Activated CD8-positive, alpha-beta T cell treated with anti-CD3 and anti-CD28 coated beads, Interleukin-2, amount 10 ng/mL, durations not matched to agents 7 days and 5 days (primary cell): ENCODE measurements at regions of chr10 and their contacts with region 1.

Region 1: GRCh38 chr10:114876602-114877300 is 55.2 kb downstream of the FHIP2A start:
- DNase-seq: peak; percentile 55
- ATAC-seq: peak; percentile 67
- H3K4me3 Mint-ChIP-seq: no peak overlapping the region
- H3K27ac Mint-ChIP-seq: no peak overlapping the region
- H3K4me1 Mint-ChIP-seq: peaks cover 15% of the 10 kb centered on the region
- H3K27me3 Mint-ChIP-seq: peaks cover 31% of the 10 kb centered on the region

Region 2: GRCh38 chr10:114821293-114821914 is 55.3 kb before region 1 on chr10 and contains the start of gene FHIP2A:
- CTCF ChIA-PET with region 1: interaction called, 15 read pairs
- POLR2A ChIA-PET with region 1: interaction called, 3 read pairs
- DNase-seq: peak; percentile 84
- ATAC-seq: peak; percentile 93
- H3K4me3 Mint-ChIP-seq: peak within 1 kb of the TSS; percentile 95
- H3K27ac Mint-ChIP-seq: peak within 1 kb of the TSS; percentile 94
- H3K4me1 Mint-ChIP-seq: peaks cover 31% of the 10 kb centered on the region
- H3K27me3 Mint-ChIP-seq: peaks cover 12% of the 10 kb centered on the region
- total RNA-seq, gene FHIP2A: 15.2 to 17.6 TPM

Region 3: GRCh38 chr10:114862456-114862855 is 14.3 kb before region 1 on chr10:
- CTCF ChIA-PET with region 1: interaction called, 36 read pairs
- POLR2A ChIA-PET with region 1: no interaction called
- DNase-seq: no peak
- ATAC-seq: no peak
- H3K4me3 Mint-ChIP-seq: no peak overlapping the region
- H3K27ac Mint-ChIP-seq: no peak overlapping the region
- H3K4me1 Mint-ChIP-seq: peaks cover 2% of the 10 kb centered on the region
- H3K27me3 Mint-ChIP-seq: no peaks in the 10 kb centered on the region

Region 4: DNA sequence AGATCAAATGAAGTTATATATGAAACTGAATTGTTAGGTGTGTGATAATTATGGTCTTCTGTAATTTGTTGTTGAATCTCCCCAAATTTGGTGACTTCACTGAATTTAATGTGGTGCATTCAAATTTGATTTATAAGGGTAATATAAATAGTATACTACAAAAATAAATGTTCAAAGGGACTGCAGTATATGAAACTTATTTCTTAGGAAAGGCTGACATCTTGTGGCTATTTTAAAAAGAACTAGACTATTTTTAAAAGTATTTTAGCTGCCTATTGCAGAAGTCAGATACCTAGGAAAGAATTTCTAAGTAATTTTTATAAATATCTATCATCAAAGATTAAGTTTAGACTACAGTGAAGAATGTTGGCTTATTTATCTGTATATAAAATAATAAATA is 253.0 kb after region 1 on chr10:
- CTCF ChIA-PET with region 1: interaction called, 13 read pairs
- POLR2A ChIA-PET with region 1: no interaction called
- DNase-seq: no peak
- ATAC-seq: no peak
- H3K4me3 Mint-ChIP-seq: no peak overlapping the region
- H3K27ac Mint-ChIP-seq: no peak overlapping the region
- H3K4me1 Mint-ChIP-seq: no peaks in the 10 kb centered on the region
- H3K27me3 Mint-ChIP-seq: no peaks in the 10 kb centered on the region